CD8-positive, alpha-beta memory T cell (primary cell): ENCODE measurements at regions of chr11 and their contacts with region 1.

Region 1: GRCh38 chr11:65593518-65594298 is 1.9 kb downstream of the KCNK7 start:
- DNase-seq: peak in 2 of 5 donors; percentile 45 to 66
- H3K4me3 ChIP-seq: no peak overlapping the region
- H3K4me3 Mint-ChIP-seq: no peak overlapping the region
- H3K27ac ChIP-seq: no peak overlapping the region
- H3K27ac Mint-ChIP-seq: peak overlapping the region in 2 of 8 donors; percentile 48 to 84
- H3K4me1 ChIP-seq: peaks cover 17% of the 10 kb centered on the region
- H3K4me1 Mint-ChIP-seq: peaks cover 9 to 19% (median 11%) of the 10 kb centered on the region in 3 donors
- H3K27me3 ChIP-seq: no peaks in the 10 kb centered on the region
- H3K27me3 Mint-ChIP-seq: no peaks in the 10 kb centered on the region

Region 2: GRCh38 chr11:65386307-65387081 is 207.2 kb before region 1 on chr11 and contains the start of gene FRMD8:
- CTCF ChIA-PET with region 1: no interaction called
- POLR2A ChIA-PET with region 1: no interaction called
- DNase-seq: peak; percentile 87 to 94 (median 88)
- H3K4me3 ChIP-seq: peak within 1 kb of the TSS; percentile 78
- H3K4me3 Mint-ChIP-seq: peak within 1 kb of the TSS; percentile 89 to 94 (median 90)
- H3K27ac ChIP-seq: peak within 1 kb of the TSS; percentile 89
- H3K27ac Mint-ChIP-seq: peak within 1 kb of the TSS; percentile 97 to 100 (median 99)
- H3K4me1 ChIP-seq: peaks cover 84% of the 10 kb centered on the region
- H3K4me1 Mint-ChIP-seq: peaks cover 69 to 90% (median 71%) of the 10 kb centered on the region in 3 donors
- H3K27me3 ChIP-seq: no peaks in the 10 kb centered on the region
- H3K27me3 Mint-ChIP-seq: no peaks in the 10 kb centered on the region
- total RNA-seq, gene FRMD8: 44.9 to 49.8 TPM

Region 3: DNA sequence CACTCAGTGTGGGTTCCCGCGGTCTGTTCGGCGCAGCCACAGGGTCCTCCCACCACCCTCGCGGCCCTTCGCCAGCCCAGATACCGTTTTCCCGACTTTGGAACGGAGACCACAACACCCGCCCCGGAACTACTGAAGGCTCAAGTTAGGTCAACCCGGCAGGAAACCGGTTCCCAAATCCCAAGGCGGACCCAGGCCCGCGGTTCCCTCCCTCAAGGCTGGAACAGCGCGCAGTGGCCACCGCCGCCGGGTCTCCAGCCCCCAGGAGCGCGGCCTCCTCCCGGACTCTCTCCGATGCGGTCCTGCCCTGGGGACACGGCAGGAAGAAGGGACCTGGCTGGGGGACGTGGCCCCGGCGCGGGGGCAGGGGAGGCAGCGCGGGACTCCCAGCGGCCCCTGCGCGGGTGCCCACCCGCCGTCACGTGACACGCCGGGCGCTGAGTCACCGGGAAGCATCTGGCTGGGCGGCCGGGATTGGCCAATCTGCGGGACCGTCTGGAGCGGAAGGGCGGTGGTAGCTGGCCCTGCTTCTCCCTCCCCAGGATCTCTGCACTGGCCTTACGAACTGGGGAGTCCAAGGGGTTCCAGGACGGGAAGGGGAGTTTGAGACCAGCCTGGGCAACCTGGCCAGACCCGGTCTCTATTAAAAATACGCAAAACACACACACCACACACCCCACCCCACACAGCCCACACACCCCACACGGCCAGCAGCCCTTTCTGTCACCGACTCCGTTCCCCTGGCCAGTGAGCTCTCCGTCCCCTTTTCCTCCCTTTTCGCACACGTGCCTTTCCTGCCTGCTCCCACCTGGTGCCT is 116.4 kb before region 1 on chr11:
- CTCF ChIA-PET with region 1: no interaction called
- POLR2A ChIA-PET with region 1: no interaction called
- DNase-seq: peak; percentile 82 to 94 (median 86)
- H3K4me3 ChIP-seq: peak overlapping the region; percentile 86
- H3K4me3 Mint-ChIP-seq: peak overlapping the region; percentile 90 to 100 (median 97)
- H3K27ac ChIP-seq: peak overlapping the region; percentile 98
- H3K27ac Mint-ChIP-seq: peak overlapping the region; percentile 96 to 100 (median 100)
- H3K4me1 ChIP-seq: peaks cover 12% of the 10 kb centered on the region
- H3K4me1 Mint-ChIP-seq: peaks cover 12 to 27% (median 14%) of the 10 kb centered on the region in 3 donors
- H3K27me3 ChIP-seq: no peaks in the 10 kb centered on the region
- H3K27me3 Mint-ChIP-seq: no peaks in the 10 kb centered on the region

Region 4: GRCh38 chr11:65524741-65525545 is 68.8 kb before region 1 on chr11 and contains the start of gene SCYL1:
- CTCF ChIA-PET with region 1: interaction called, 11 read pairs
- POLR2A ChIA-PET with region 1: no interaction called
- DNase-seq: peak; percentile 72 to 88 (median 76)
- H3K4me3 ChIP-seq: peak within 1 kb of the TSS; percentile 75
- H3K4me3 Mint-ChIP-seq: peak within 1 kb of the TSS; percentile 81 to 91 (median 85)
- H3K27ac ChIP-seq: peak within 1 kb of the TSS; percentile 76
- H3K27ac Mint-ChIP-seq: peak within 1 kb of the TSS; percentile 73 to 97 (median 92)
- H3K4me1 ChIP-seq: peaks cover 52% of the 10 kb centered on the region
- H3K4me1 Mint-ChIP-seq: peaks cover 45 to 62% (median 46%) of the 10 kb centered on the region in 3 donors
- H3K27me3 ChIP-seq: no peaks in the 10 kb centered on the region
- H3K27me3 Mint-ChIP-seq: peaks cover 0 to 1% of the 10 kb centered on the region in 2 donors
- total RNA-seq, gene SCYL1: 85.1 to 88.5 TPM

Region 5: GRCh38 chr11:65604258-65604657 is 10.6 kb after region 1 on chr11:
- CTCF ChIA-PET with region 1: interaction called, 16 read pairs
- POLR2A ChIA-PET with region 1: no interaction called
- DNase-seq: no peak
- H3K4me3 ChIP-seq: no peak overlapping the region
- H3K4me3 Mint-ChIP-seq: no peak overlapping the region
- H3K27ac ChIP-seq: no peak overlapping the region
- H3K27ac Mint-ChIP-seq: peak overlapping the region in 1 of 8 donors; percentile 32
- H3K4me1 ChIP-seq: no peaks in the 10 kb centered on the region
- H3K4me1 Mint-ChIP-seq: peaks cover 4 to 6% (median 6%) of the 10 kb centered on the region in 3 donors
- H3K27me3 ChIP-seq: no peaks in the 10 kb centered on the region
- H3K27me3 Mint-ChIP-seq: no peaks in the 10 kb centered on the region

Region 6: DNA sequence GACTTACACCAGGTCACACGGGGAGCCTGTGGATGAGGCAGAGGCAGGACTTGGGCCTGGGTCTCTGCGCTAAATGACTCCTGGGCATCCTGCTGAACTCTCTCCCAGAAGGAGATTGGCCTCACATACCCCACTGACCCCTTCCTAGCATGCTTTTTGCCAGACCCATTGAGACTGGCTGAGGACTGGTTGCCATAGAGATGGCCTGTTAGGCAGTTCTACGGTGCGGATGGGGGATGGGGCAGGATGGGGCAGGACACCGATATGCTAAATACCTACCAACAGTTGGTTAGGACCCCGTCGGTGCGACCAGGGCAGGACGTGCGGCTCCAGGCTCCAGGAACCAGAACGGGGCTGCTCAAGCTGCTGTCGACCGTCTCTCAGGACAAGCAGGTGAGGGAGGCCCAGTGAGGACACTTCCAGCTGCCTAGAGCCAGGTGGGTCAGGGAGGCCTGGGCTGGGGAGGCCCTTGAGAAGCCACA is 351.8 kb after region 1 on chr11 and contains the start of gene TSGA10IP:
- CTCF ChIA-PET with region 1: no interaction called
- POLR2A ChIA-PET with region 1: no interaction called
- DNase-seq: no peak
- H3K4me3 ChIP-seq: no peak within 1 kb of the TSS
- H3K4me3 Mint-ChIP-seq: no peak within 1 kb of the TSS
- H3K27ac ChIP-seq: no peak within 1 kb of the TSS
- H3K27ac Mint-ChIP-seq: no peak within 1 kb of the TSS
- H3K4me1 ChIP-seq: no peaks in the 10 kb centered on the region
- H3K4me1 Mint-ChIP-seq: no peaks in the 10 kb centered on the region
- H3K27me3 ChIP-seq: no peaks in the 10 kb centered on the region
- H3K27me3 Mint-ChIP-seq: no peaks in the 10 kb centered on the region
- total RNA-seq, gene TSGA10IP: not detected